SK-N-SH (cell line): ENCODE measurements at regions of chrX and their contacts with region 1.

Region 1: DNA sequence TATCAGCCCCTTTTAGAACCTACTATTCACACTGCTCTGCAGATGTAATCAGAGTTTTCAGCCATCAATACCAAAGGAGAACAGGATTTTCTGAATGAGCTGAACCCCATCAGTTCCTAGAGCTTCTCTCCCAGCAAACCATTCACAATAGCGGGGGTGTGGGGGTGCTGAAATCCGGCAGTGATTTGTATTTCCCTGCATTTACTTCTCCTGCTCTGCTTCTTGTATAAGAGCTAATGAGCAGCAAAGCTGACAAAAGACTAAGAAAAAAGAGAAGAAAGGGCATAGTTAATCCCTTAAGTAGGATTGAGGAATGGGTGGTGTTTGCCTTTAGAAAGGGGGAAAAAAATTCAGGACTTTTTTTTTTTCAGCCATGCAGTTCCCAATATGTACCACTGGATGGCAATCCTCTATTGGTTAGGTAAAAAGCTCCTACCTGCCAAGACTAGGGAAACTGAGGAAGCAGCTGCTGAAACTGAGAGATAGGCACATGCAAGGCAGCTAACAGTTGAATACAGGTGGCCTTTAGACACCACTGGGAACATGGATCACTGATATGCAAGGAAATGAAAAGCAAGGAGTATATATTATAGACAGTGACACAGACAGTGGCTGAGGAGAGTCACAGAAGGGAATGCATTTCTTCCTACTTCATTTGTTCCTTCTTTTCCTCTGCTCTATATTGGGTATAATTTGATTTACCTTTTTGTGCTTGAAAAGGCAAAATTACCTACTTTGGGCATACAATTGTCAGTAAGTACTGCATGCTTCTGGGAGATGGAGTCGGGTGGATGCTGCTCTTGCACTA is 217.9 kb downstream of the HS6ST2 start:
- DNase-seq: peak; percentile 25
- H3K4me3 ChIP-seq: no peak overlapping the region; a peak in 1 of 4 replicates
- H3K27ac ChIP-seq: no peak overlapping the region
- H3K4me1 ChIP-seq: peaks cover 0 to 3% of the 10 kb centered on the region in 2 experiments; a peak in 1 of 4 replicates
- H3K27me3 ChIP-seq: no peaks in the 10 kb centered on the region; the same call in 1 of the 2 replicates
- CTCF ChIP-seq: peak; percentile 67
- EP300 ChIP-seq: no peak
- RAD21 ChIP-seq: peak; percentile 64

Region 2: DNA sequence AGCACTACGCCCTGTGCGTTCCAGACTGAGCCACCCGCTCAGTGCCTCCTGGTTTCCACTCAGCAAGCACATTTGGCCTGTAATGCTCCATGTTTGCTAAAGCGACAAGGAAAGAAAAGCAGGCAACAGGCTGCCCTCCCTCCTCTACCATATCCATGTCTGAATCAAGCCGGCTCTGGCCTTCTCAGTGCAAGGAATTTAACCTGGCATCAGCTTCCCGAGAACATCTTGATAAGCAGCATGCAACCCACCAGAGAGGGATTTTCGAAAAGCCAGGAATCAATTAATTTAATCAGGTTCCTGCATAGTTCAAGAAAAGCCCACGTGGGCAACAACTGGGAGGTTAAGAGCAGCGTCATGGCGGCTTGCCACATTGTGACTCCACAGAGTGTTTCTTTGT is 10.3 kb before region 1 on chrX:
- CTCF ChIA-PET with region 1: interaction called, 15 read pairs
- POLR2A ChIA-PET with region 1: no interaction called
- DNase-seq: peak; percentile 10
- H3K4me3 ChIP-seq: no peak overlapping the region
- H3K27ac ChIP-seq: peak overlapping the region in 1 of 2 experiments; percentile 55; a peak in 1 of 4 replicates
- H3K4me1 ChIP-seq: peaks cover 0 to 12% of the 10 kb centered on the region in 2 experiments; a peak in 1 of 4 replicates
- H3K27me3 ChIP-seq: peaks cover 8% of the 10 kb centered on the region; the same call in 1 of the 2 replicates
- CTCF ChIP-seq: no peak
- EP300 ChIP-seq: no peak
- RAD21 ChIP-seq: no peak

Region 3: DNA sequence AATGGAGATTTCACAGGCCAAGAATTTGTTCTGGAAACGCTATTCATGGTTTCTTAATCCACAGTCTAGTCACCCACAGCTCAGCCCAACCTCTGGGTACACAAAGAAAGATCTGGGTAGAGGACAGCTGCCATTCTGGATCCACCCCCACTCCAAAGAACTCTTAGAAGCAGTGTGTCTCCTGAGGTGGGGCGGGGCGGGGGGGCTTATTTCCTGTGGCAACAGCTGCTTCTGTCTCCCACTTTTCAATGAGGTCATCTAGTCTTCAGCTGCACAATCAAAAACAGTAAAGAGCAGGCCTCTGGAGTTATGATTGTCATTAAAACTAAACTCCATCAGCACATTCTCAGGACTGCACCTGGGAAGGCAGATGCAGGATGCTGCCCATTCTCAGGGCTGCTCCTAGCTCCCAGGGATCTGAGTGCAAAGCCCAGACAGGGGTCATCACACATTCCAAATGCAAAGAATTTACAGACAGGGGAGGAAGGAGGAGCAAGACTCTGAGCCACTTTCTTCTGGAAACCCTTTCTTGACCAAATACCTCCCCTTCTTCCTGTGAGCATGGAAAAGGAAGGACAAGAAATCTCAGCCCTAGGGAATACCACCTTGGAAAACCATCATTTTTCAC is 10.7 kb after region 1 on chrX:
- CTCF ChIA-PET with region 1: interaction called, 24 read pairs
- POLR2A ChIA-PET with region 1: no interaction called
- DNase-seq: no peak
- H3K4me3 ChIP-seq: no peak overlapping the region
- H3K27ac ChIP-seq: no peak overlapping the region
- H3K4me1 ChIP-seq: no peaks in the 10 kb centered on the region; a peak in 1 of 4 replicates
- H3K27me3 ChIP-seq: peaks cover 4% of the 10 kb centered on the region; the same call in 1 of the 2 replicates
- CTCF ChIP-seq: no peak
- EP300 ChIP-seq: no peak
- RAD21 ChIP-seq: no peak

Region 4: DNA sequence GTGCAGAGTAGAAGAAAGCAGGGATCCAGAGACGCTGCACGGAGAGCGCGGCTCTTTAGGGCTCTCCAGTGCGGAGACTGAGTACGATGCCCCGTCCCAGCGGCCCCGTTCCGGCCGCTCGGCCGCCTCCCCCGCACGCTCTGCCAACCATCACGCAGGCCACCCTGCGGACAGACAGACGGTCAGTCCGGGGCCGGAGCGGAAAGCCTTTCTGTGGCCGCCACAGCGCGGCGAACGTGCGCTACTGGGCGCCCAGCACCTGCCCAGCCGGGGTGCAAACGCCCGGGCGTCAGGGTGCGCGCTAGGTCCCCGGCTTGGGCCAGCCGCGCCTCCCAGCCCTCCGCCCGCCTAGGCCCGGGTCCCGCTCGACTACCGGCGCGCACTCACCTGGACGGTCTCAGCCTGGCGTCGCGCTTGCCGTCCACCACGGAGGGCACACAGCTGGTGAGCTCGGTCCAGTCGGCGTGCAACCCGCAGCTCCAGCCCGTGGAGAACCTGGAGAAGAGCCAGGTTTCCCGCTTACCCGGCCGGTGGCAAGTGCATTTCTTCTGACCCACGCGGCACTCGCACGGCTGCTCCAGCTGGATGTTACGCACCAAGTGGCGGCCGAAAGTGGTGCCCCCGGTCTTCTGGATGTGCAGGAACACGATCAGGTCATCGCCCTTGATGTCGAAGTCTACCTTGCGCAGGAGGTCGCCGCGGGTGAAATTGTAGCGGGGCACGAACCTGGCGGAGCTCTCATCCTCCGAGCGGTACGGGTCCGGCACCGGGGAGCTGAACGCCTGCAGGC is 216.1 kb after region 1 on chrX:
- CTCF ChIA-PET with region 1: interaction called, 10 read pairs
- POLR2A ChIA-PET with region 1: no interaction called
- DNase-seq: peak; percentile 59
- H3K4me3 ChIP-seq: peak overlapping the region in 1 of 2 experiments; percentile 48; a peak in 2 of 4 replicates
- H3K27ac ChIP-seq: peak overlapping the region in 1 of 2 experiments; percentile 53; a peak in 1 of 4 replicates
- H3K4me1 ChIP-seq: peaks cover 0 to 18% of the 10 kb centered on the region in 2 experiments; a peak in 1 of 4 replicates
- H3K27me3 ChIP-seq: peaks cover 41% of the 10 kb centered on the region
- CTCF ChIP-seq: no peak
- EP300 ChIP-seq: no peak
- RAD21 ChIP-seq: peak; percentile 5; the same call in 1 of the 2 replicates

Region 5: DNA sequence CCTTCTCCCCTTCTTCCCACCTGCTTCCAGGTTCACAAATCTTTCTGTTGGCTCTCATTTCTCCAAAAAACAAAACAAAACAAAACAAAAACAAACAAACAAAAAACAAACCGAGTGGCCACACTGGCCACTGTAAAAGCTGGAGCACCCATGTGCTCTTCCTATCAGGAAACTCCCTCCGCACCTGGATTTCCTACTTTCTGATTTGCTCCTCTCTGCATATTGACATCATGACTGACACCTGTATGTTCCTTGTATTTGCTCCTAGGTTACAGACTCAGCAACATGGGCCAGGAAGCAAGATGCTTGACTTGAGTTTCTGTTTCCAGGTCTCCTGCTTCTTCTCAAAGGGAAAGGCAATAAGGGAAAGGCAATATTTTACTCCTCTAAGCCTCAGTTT is 986.1 kb after region 1 on chrX:
- CTCF ChIA-PET with region 1: no interaction called
- POLR2A ChIA-PET with region 1: no interaction called
- DNase-seq: no peak
- H3K4me3 ChIP-seq: no peak overlapping the region; a peak in 1 of 4 replicates
- H3K27ac ChIP-seq: peak overlapping the region in 1 of 2 experiments; percentile 76; a peak in 2 of 4 replicates
- H3K4me1 ChIP-seq: peaks cover 0 to 6% of the 10 kb centered on the region in 2 experiments; a peak in 1 of 4 replicates
- H3K27me3 ChIP-seq: no peaks in the 10 kb centered on the region
- CTCF ChIP-seq: no peak
- EP300 ChIP-seq: no peak
- RAD21 ChIP-seq: no peak